ENCODE measurements at regions of chr9 and their contacts with region 1.

Region 1: DNA sequence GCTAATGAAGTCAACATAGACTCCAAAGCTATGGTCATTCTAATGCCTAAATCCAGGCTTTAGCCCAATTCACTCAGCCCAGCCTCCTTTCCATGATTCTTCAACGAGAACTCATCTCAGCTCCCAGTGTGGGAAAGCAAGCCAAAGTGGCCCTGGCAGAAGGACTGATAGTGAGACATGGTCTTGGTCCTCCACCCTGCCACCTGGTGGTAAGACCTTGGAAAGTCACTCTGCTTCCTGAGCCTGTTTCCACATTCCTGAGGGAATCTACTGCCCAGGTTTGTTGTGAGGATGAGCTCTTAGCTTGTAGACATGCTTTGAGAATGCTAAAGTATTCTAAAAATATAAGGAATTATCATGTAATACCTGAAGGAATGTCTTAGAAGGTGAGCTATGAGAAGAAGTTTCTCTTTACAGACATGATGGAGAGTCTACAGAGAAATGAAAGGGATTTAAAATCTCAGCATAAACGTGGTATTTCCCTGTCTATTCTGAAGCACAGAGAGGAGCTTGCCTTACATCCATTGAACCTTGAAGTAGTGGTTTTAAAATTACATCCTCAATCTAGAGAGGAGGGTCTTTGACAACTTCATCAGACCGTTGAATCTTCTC is 173.5 kb downstream of the TRIM32 start:
- DNase-seq: peak; percentile 27
- H3K4me3 Mint-ChIP-seq: no peak overlapping the region
- H3K27ac Mint-ChIP-seq: no peak overlapping the region
- H3K4me1 Mint-ChIP-seq: no peaks in the 10 kb centered on the region
- H3K27me3 Mint-ChIP-seq: no peaks in the 10 kb centered on the region

Region 2: DNA sequence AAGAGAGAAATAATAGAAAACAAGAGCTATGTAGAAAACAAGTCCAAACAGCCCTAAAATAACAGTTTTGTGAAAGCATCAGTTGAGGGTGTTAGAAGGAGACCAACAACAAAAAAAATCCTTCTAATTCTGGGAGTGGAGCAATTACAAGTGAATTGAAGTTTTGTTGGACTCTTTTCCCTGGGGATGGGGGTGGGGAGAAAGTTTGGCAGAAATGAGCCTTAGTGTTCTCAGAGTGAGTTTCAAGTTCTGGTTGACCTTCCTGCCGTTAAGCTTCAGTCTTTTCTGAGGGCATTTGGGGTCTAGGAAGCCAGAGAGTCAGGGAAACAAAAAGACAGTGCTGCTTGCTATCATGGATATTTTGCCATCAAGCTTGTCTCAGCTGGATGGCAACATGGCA is 279.8 kb before region 1 on chr9:
- CTCF ChIA-PET with region 1: no interaction called
- DNase-seq: no peak
- H3K4me3 Mint-ChIP-seq: no peak overlapping the region
- H3K27ac Mint-ChIP-seq: no peak overlapping the region
- H3K4me1 Mint-ChIP-seq: no peaks in the 10 kb centered on the region
- H3K27me3 Mint-ChIP-seq: no peaks in the 10 kb centered on the region

Region 3: DNA sequence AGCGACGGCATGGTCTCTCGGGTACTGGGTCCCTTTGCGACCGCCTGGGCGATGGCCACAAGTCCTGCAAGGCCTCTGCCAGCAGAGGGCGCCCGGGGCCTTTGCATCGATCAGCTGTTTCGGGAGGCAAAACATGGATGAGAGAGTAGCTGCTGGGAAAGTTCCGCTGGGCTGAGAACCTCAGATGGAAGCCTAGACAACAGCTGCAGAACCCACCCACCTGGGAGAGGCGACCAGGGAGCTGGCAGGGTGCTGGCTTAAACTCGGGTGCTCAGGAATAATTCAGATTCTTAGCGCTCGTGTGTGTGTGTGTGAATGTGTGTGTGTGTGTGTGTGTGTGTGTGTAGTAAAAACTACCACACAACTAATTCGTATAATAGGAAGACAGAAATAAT is 123.5 kb before region 1 on chr9:
- CTCF ChIA-PET with region 1: interaction called, 51 read pairs
- DNase-seq: peak; percentile 68
- H3K4me3 Mint-ChIP-seq: no peak overlapping the region
- H3K27ac Mint-ChIP-seq: no peak overlapping the region
- H3K4me1 Mint-ChIP-seq: no peaks in the 10 kb centered on the region
- H3K27me3 Mint-ChIP-seq: peaks cover 8% of the 10 kb centered on the region

Region 4: GRCh38 chr9:116842658-116843057 is 18.0 kb before region 1 on chr9:
- CTCF ChIA-PET with region 1: interaction called, 12 read pairs
- DNase-seq: no peak
- H3K4me3 Mint-ChIP-seq: no peak overlapping the region
- H3K27ac Mint-ChIP-seq: no peak overlapping the region
- H3K4me1 Mint-ChIP-seq: no peaks in the 10 kb centered on the region
- H3K27me3 Mint-ChIP-seq: no peaks in the 10 kb centered on the region

Measured in activated naive CD4-positive, alpha-beta T cell treated with anti-CD3 and anti-CD28 coated beads, Interleukin-2, amount 10 ng/mL, durations not matched to agents 7 days and 5 days (primary cell).